Dorsolateral prefrontal cortex (tissue), 120 donors: ENCODE measurements at regions of chr1 and their contacts with region 1.

Region 1: GRCh38 chr1:36864182-36864822 is 170.0 kb downstream of the GRIK3 start:
- DNase-seq: peak in 2 of 10 donors; percentile 29 to 32
- H3K4me3 ChIP-seq: no peak overlapping the region
- H3K27ac ChIP-seq: peak overlapping the region in 1 of 59 donors; percentile 32
- H3K27me3 ChIP-seq: peaks cover 0 to 9% (median 0%) of the 10 kb centered on the region in 45 donors
- CTCF ChIP-seq: peak in 48 of 56 donors; percentile 9 to 56 (median 38)

Region 2: GRCh38 chr1:36609241-36610027 is 254.9 kb before region 1 on chr1:
- intact Hi-C with region 1: loop called in 1 of 2 experiments (anchors 10 kb)
- DNase-seq: peak; percentile 28 to 81 (median 72)
- H3K4me3 ChIP-seq: no peak overlapping the region
- H3K27ac ChIP-seq: no peak overlapping the region
- H3K27me3 ChIP-seq: peaks cover 0 to 4% (median 0%) of the 10 kb centered on the region in 45 donors
- CTCF ChIP-seq: peak; percentile 53 to 94 (median 84)

Region 3: GRCh38 chr1:36846357-36846756 is 17.9 kb before region 1 on chr1:
- intact Hi-C with region 1: no loop called
- DNase-seq: no peak
- H3K4me3 ChIP-seq: no peak overlapping the region
- H3K27ac ChIP-seq: peak overlapping the region in 11 of 59 donors; percentile 0 to 47 (median 34)
- H3K27me3 ChIP-seq: peaks cover 0 to 15% (median 0%) of the 10 kb centered on the region in 45 donors
- CTCF ChIP-seq: no peak